Left cardiac atrium (tissue), 4 donors: ENCODE measurements at regions of chr9 and their contacts with region 1.

Region 1: DNA sequence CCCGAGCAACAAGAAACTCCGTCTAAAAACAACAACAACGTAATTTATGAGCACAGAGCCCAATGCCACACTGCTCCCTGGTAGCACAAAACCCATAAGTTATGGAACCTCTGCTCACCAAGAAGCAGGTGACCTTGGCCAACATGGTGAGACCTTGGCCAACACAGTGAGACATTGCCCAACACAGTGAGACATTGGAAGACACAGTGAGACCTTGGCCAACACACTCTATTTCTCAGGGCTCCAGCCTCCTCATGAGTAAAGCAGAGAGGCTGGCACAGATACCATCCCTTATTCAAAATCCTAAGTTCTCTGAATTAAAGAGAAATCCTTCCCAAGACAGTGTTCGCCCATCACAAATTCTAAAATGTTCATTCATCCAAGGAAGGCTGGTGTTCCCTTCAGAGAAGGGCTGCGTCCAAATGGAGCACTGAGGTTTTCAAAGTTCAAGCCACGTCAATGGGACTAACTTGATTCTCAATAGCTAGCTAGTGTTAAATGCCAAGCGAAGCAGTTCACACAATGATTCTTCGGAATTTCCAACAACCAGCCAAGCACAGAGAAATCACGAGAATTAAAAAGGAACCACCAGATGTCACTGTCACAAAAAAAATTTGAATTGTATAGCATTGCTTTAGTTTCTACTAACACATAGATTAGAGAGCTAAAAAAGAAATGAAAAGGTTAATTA is 29.5 kb downstream of the TTC39B start:
- DNase-seq: no peak
- ATAC-seq: peak; percentile 31 to 53

Region 2: DNA sequence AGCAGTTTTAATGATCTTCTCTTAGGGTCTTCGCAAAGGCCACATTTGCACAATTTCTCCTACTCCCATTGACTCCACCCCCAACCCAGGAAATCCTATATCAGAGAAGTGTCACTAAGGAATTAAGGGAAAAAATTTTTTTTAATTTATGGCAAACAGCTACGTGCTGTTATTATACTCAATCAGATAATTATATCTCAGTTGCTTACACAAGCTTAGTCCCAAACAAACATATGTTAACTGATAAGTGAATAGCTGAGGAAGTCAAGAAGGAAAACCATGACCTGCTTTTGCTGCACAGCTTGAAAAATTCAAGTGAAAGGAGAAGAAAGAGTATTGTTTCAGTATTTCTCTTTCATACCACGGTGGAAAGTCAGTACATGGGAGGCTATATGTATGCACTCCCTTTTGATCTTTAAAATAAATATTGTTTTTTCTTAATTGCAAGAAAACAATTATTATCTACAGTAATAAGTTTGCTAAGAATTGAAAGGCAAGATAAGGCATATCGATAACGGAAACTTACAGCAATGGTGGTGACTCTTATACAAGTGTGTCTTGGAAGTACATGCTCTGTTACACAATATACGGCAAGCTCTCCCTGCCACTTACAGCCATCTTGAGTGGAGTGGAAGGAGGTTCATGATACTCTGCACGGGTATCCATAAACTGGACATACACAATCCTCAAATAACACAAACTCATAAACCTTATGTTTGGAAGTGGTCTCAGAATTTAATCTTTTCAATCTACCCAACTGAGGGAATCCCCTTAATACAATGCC is 199.4 kb before region 1 on chr9:
- intact Hi-C with region 1: no loop called
- DNase-seq: no peak
- ATAC-seq: no peak

Region 3: GRCh38 chr9:15422372-15423230 is 145.1 kb after region 1 on chr9 and contains the start of gene SNAPC3:
- intact Hi-C with region 1: loop called in 1 of 2 experiments (anchors 10 kb)
- DNase-seq: peak; percentile 95
- ATAC-seq: peak; percentile 99 to 100
- total RNA-seq, gene SNAPC3: 22.6 to 23.6 TPM

Region 4: DNA sequence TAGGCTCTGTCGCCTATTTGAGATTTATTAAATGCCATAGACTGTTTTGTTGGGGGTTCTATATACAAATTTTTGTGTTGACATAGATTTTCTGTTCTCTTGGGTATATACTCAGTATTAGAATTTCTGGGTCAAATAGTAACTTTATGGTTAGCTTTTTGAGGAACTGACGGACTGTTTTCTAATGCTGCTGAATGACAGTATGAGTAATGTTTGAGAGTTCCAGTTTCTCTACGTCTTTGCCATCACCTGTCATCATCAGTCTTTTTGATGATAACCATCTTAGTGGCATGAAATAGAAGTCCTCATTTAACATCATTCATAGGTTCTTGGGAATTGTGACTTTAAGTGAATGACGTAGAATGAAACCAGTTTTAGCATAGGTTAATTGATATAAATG is 335.4 kb after region 1 on chr9:
- intact Hi-C with region 1: loop called in 1 of 2 experiments (anchors 5 kb)
- DNase-seq: no peak
- ATAC-seq: no peak